ENCODE measurements at regions of chr18 and their contacts with region 1.

Region 1: DNA sequence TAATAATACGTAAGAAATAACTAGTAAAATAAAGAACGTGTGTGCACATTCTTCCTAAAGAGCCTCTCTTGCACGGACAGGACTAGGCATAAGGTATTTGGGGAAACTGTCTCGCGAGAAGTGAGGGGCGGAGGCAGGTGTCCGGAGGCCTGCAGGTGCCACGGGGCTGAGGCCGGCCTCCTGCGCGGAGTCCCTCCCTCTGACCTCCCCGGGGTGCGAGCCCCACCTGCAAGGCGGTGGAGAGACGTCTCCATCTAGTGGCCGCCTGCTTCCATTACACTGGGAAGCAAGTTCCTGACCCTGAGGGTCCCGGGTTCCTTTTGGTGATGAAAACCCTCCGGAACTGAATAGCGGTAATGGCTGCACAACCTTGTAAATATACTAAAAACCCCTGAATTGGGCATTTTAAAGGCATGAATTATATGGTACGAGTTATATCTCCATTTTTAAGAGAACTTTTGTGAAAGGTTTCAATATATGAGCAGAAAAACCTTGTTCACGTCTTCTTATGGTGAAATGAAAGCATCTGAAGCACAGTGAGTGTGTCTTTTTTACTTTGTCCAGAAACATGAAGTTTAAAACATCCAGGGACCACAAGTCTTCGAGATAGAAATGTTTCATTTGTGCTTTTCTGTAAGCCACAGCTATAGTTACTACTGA is 35.5 kb upstream of the CTDP1 start:
- DNase-seq: peak in 1 of 2 donors; percentile 72
- ATAC-seq: peak; percentile 87
- H3K4me3 ChIP-seq: no peak overlapping the region
- H3K27ac ChIP-seq: no peak overlapping the region
- H3K4me1 ChIP-seq: no peaks in the 10 kb centered on the region
- H3K27me3 ChIP-seq: no peaks in the 10 kb centered on the region

Region 2: GRCh38 chr18:79528846-79529245 is 115.3 kb before region 1 on chr18:
- intact Hi-C with region 1: loop called (anchors 5 kb)
- DNase-seq: peak; percentile 60 to 81
- ATAC-seq: peak; percentile 44
- H3K4me3 ChIP-seq: no peak overlapping the region
- H3K27ac ChIP-seq: no peak overlapping the region
- H3K4me1 ChIP-seq: no peaks in the 10 kb centered on the region
- H3K27me3 ChIP-seq: no peaks in the 10 kb centered on the region